Activated B cell treated with CpG ODN at 0.5 μM for 24 hours (primary cell): ENCODE measurements at regions of chr11 and their contacts with region 1.

Region 1: GRCh38 chr11:117843666-117844484 is 19.3 kb upstream of the FXYD2 start:
- DNase-seq: peak; percentile 79
- ATAC-seq: peak; percentile 98
- H3K4me3 Mint-ChIP-seq: no peak overlapping the region
- H3K27ac Mint-ChIP-seq: no peak overlapping the region
- H3K4me1 Mint-ChIP-seq: no peaks in the 10 kb centered on the region
- H3K27me3 Mint-ChIP-seq: peaks cover 1% of the 10 kb centered on the region
- CTCF ChIP-seq: peak; percentile 40

Region 2: GRCh38 chr11:117807482-117808327 is 36.2 kb before region 1 on chr11:
- CTCF ChIA-PET with region 1: interaction called, 11 read pairs
- POLR2A ChIA-PET with region 1: no interaction called
- intact Hi-C with region 1: loop called (anchors 1 kb)
- DNase-seq: peak; percentile 73
- ATAC-seq: peak; percentile 87
- H3K4me3 Mint-ChIP-seq: no peak overlapping the region
- H3K27ac Mint-ChIP-seq: peak overlapping the region; percentile 38
- H3K4me1 Mint-ChIP-seq: peaks cover 17% of the 10 kb centered on the region
- H3K27me3 Mint-ChIP-seq: peaks cover 5% of the 10 kb centered on the region
- CTCF ChIP-seq: peak; percentile 72

Region 3: GRCh38 chr11:117828611-117829368 is 15.1 kb before region 1 on chr11:
- CTCF ChIA-PET with region 1: interaction called, 11 read pairs
- POLR2A ChIA-PET with region 1: interaction called, 4 read pairs
- intact Hi-C with region 1: loop called (anchors 2 kb)
- DNase-seq: peak; percentile 79
- ATAC-seq: peak; percentile 89
- H3K4me3 Mint-ChIP-seq: peak overlapping the region; percentile 44
- H3K27ac Mint-ChIP-seq: peak overlapping the region; percentile 80
- H3K4me1 Mint-ChIP-seq: peaks cover 51% of the 10 kb centered on the region
- H3K27me3 Mint-ChIP-seq: peaks cover 23% of the 10 kb centered on the region
- CTCF ChIP-seq: no peak

Region 4: GRCh38 chr11:117870103-117870952 is 26.5 kb after region 1 on chr11:
- CTCF ChIA-PET with region 1: no interaction called
- POLR2A ChIA-PET with region 1: no interaction called
- intact Hi-C with region 1: no loop called
- DNase-seq: no peak
- ATAC-seq: no peak
- H3K4me3 Mint-ChIP-seq: no peak overlapping the region
- H3K27ac Mint-ChIP-seq: no peak overlapping the region
- H3K4me1 Mint-ChIP-seq: peaks cover 11% of the 10 kb centered on the region
- H3K27me3 Mint-ChIP-seq: peaks cover 41% of the 10 kb centered on the region
- CTCF ChIP-seq: no peak

Region 5: GRCh38 chr11:117900121-117900648 is 56.3 kb after region 1 on chr11:
- CTCF ChIA-PET with region 1: interaction called, 10 read pairs
- POLR2A ChIA-PET with region 1: no interaction called
- intact Hi-C with region 1: loop called (anchors 1 kb)
- DNase-seq: peak; percentile 40
- ATAC-seq: peak; percentile 83
- H3K4me3 Mint-ChIP-seq: peak overlapping the region; percentile 9
- H3K27ac Mint-ChIP-seq: peak overlapping the region; percentile 87
- H3K4me1 Mint-ChIP-seq: peaks cover 26% of the 10 kb centered on the region
- H3K27me3 Mint-ChIP-seq: no peaks in the 10 kb centered on the region
- CTCF ChIP-seq: no peak

Region 6: GRCh38 chr11:118171269-118172062 is 327.6 kb after region 1 on chr11:
- CTCF ChIA-PET with region 1: interaction called, 14 read pairs
- POLR2A ChIA-PET with region 1: no interaction called
- intact Hi-C with region 1: loop called (anchors 1 kb)
- DNase-seq: peak; percentile 58
- ATAC-seq: peak; percentile 86
- H3K4me3 Mint-ChIP-seq: no peak overlapping the region
- H3K27ac Mint-ChIP-seq: no peak overlapping the region
- H3K4me1 Mint-ChIP-seq: no peaks in the 10 kb centered on the region
- H3K27me3 Mint-ChIP-seq: peaks cover 34% of the 10 kb centered on the region
- CTCF ChIP-seq: peak; percentile 81